Ovary (tissue), 10 donors: ENCODE measurements at regions of chr4 and their contacts with region 1.

Region 1: DNA sequence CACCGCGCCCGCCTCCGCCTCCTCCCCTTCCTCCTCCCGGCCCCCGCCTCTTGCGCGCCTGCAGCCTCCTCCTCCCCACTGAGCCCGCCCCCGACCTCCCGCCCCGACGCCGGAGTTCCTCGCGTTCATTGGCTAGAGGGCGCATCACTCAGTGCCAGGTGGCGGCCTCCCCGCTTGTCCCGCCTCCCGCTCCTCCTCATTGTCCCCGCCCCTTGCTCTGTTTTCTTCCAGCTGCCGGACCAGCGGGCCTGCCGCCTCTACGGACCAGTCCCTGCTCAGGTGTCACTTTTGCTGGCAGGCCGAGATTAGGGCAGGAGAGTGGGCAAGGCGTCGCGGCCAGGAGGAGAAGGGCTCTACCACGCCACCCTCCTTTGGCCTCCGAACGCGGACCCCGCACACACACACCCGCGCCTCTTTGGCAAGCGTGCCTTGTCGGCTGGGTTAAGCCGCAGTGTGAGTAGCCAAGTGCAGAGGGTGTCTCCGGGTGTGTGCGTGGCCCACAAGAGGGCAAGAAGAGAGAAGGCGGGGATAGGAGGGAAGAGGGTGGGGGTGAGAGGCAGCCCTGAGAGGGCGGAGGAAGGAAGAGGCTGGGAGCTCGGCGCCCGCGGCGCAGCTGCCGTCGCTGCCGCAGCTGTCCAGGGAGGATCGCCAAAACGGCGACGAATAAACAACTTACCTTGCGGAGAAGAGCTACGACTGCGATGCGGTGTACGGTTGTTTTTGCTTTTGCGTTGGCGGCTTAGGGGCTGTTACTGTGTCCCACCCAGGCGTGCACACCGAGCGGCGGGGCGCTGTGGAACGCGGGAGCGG is 436 bp upstream of the PPP3CA start:
- DNase-seq: peak; percentile 99 to 100 (median 100)
- H3K4me3 ChIP-seq: peak overlapping the region; percentile 90
- H3K27ac ChIP-seq: peak overlapping the region; percentile 74 to 94
- H3K4me1 ChIP-seq: peaks cover 4% of the 10 kb centered on the region
- H3K27me3 ChIP-seq: no peaks in the 10 kb centered on the region
- CTCF ChIP-seq: peak in 1 of 3 donors; percentile 39
- EP300 ChIP-seq: no peak
- POLR2A ChIP-seq: peak; percentile 72

Region 2: GRCh38 chr4:101191302-101192098 is 156.3 kb before region 1 on chr4:
- intact Hi-C with region 1: loop called in 2 of 4 experiments (anchors 5 to 10 kb)
- DNase-seq: peak; percentile 78 to 88 (median 81)
- H3K4me3 ChIP-seq: no peak overlapping the region
- H3K27ac ChIP-seq: peak overlapping the region in 1 of 2 donors; percentile 66
- H3K4me1 ChIP-seq: peaks cover 8% of the 10 kb centered on the region
- H3K27me3 ChIP-seq: no peaks in the 10 kb centered on the region
- CTCF ChIP-seq: no peak
- EP300 ChIP-seq: peak; percentile 46
- POLR2A ChIP-seq: no peak

Region 3: GRCh38 chr4:101439926-101440325 is 92.2 kb after region 1 on chr4:
- intact Hi-C with region 1: no loop called
- DNase-seq: no peak
- H3K4me3 ChIP-seq: no peak overlapping the region
- H3K27ac ChIP-seq: no peak overlapping the region
- H3K4me1 ChIP-seq: no peaks in the 10 kb centered on the region
- H3K27me3 ChIP-seq: no peaks in the 10 kb centered on the region
- CTCF ChIP-seq: no peak
- EP300 ChIP-seq: no peak
- POLR2A ChIP-seq: no peak

Region 4: DNA sequence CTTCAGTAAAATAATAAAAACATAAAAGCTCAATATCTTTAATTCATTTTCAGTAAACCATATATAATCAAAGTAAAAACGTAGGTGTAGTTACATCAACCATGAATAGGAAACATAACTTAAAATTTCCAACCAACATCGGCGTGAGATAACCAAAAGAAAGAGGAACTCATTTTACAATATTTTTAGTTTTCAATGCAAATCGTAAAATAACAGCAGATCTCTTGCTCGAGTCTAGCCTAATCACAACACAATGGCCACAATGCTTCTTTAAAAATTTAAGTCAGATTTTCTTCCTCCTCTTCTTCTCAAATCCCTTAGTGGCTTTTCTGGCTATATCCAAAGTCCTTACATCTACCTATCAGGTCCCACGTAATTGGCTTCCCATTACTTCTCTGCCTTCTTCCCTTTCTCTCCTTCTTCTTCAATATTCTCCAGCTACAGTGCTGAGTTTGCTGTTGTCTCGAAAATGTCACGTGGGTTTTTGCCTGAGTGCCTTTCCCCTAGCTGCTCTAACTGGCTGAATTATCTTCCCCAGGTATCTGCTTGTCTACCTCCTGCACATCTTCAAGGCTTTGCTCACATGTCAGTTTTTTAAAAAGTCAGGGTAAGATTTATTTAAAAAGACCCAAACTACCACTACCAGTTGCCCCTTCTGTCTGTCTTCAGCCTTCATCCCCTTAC is 351.8 kb after region 1 on chr4:
- intact Hi-C with region 1: no loop called
- DNase-seq: no peak
- H3K4me3 ChIP-seq: no peak overlapping the region
- H3K27ac ChIP-seq: no peak overlapping the region
- H3K4me1 ChIP-seq: no peaks in the 10 kb centered on the region
- H3K27me3 ChIP-seq: no peaks in the 10 kb centered on the region
- CTCF ChIP-seq: no peak
- EP300 ChIP-seq: no peak
- POLR2A ChIP-seq: no peak